Activated CD4-positive, alpha-beta T cell treated with anti-CD3 and anti-CD28 coated beads, Interleukin-2, amount 10 ng/mL, durations not matched to agents 24 days and 14 days (primary cell): ENCODE measurements at regions of chr16 and their contacts with region 1.

Region 1: DNA sequence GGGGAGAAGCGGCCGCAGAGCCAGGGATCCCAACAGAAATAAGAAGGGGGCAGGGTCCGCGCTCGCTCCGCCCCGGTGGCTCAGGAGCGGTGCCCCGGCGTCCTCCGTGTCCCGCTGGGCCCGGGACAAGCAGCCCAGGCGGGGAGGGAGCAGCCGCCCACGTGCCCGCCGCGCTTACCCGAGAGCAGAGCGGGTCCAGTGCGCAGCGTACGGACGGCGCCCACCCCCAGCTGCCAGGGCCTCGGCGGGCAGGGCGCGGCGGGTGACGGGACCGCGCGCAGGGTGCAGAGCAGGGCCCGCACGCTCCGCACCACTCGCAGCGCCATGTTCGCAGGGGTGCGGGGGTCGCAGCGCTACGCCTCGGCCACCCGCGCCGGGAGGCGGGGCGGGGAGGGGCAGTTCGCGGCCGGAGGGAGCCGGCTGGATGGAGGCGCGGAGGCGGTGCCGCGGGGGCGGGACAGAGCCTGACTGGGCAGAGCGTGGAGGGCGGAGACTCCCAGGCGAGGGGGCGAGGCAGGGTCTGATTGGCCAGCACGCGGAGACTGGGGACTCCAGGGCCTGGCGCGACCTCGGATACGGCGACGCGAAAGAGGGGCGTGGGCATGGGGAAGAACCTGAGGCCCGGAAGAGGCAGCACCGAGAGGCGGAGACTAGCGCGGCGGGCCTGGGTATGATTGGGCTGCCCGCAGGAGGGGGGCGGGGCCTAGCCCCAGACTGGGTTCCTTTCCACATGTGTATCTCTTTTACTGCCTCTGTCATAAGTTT is at the start of gene GCSH:
- DNase-seq: peak; percentile 100
- H3K4me3 Mint-ChIP-seq: peak within 1 kb of the TSS; percentile 85
- H3K27ac Mint-ChIP-seq: peak within 1 kb of the TSS; percentile 38
- H3K4me1 Mint-ChIP-seq: peaks cover 5% of the 10 kb centered on the region
- H3K27me3 Mint-ChIP-seq: no peaks in the 10 kb centered on the region
- total RNA-seq, gene GCSH: 20.8 and 22.9 TPM in 2 replicates

Region 2: DNA sequence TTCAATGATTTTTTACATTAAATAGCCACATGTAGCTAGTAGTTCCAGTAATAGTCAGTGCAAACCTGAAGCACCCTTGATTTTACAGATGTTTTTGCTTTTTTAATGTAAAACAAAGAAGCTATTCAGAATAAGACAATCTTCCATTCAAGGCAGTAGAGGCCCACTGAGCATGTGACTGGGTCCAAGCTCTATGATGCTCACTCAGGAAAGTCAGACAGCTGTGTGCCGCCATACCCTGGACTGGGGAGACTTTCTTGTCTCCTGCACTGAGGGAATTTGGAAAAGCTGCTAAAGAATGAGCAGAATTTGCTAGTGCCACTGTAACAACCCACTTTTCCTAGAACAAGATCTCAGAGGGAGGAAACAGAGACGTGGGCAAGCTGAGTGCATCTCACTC is 77.6 kb before region 1 on chr16:
- intact Hi-C with region 1: no loop called
- DNase-seq: no peak
- H3K4me3 Mint-ChIP-seq: no peak overlapping the region
- H3K27ac Mint-ChIP-seq: no peak overlapping the region
- H3K4me1 Mint-ChIP-seq: peaks cover 2% of the 10 kb centered on the region
- H3K27me3 Mint-ChIP-seq: no peaks in the 10 kb centered on the region

Region 3: GRCh38 chr16:81077076-81077940 is 18.8 kb before region 1 on chr16 and contains the start of gene C16orf46:
- intact Hi-C with region 1: loop called (anchors 1 kb)
- DNase-seq: peak; percentile 99
- H3K4me3 Mint-ChIP-seq: no peak within 1 kb of the TSS
- H3K27ac Mint-ChIP-seq: no peak within 1 kb of the TSS
- H3K4me1 Mint-ChIP-seq: no peaks in the 10 kb centered on the region
- H3K27me3 Mint-ChIP-seq: peaks cover 4% of the 10 kb centered on the region
- total RNA-seq, gene C16orf46: 0.54 and 0.86 TPM in 2 replicates